Calu3 (cell line): ENCODE measurements at regions of chr2 and their contacts with region 1.

Region 1: GRCh38 chr2:19146867-19147266 is 211.6 kb downstream of the OSR1 start:
- DNase-seq: no peak
- H3K4me3 Mint-ChIP-seq: no peak overlapping the region
- H3K27ac Mint-ChIP-seq: no peak overlapping the region
- H3K4me1 Mint-ChIP-seq: peaks cover 3% of the 10 kb centered on the region
- H3K27me3 Mint-ChIP-seq: no peaks in the 10 kb centered on the region
- CTCF ChIP-seq: no peak

Region 2: DNA sequence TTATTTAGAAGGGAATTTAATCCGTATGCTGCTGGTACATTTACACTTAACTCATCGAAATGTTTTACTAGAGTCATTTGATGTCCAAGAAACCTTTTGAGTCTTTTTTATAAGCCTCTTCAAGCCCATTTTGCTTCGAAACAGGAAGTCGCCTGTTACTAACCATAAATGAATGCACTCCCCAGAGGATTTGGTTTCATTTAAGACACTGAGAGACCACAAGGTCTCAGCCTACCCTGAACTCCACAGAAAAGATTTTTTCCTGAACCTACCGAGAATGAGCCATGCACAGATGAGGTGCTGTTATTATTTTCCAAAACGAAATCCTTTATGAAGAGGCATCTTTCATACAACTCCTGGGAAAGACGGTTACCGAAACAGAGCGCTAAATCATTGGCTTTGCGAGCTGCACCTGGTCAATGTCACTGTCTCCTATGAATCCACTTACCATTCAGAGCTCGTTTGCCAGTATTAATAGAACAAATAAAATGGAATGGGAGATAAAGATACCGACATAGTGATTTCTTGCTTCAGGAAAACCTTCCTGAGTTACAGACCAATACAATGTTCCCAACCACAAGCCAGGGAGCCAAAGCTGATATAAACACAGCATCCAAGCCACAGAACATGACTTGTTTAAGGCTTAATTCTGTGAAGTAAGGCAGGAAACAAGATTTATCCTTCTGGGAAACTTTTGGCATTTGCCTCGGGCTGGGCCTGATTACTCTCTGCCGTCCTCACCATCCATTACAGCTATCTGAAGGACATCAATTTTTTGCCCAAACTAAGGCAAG is 170.5 kb before region 1 on chr2:
- CTCF ChIA-PET with region 1: no interaction called
- intact Hi-C with region 1: no loop called
- DNase-seq: no peak
- H3K4me3 Mint-ChIP-seq: no peak overlapping the region
- H3K27ac Mint-ChIP-seq: no peak overlapping the region
- H3K4me1 Mint-ChIP-seq: peaks cover 5% of the 10 kb centered on the region
- H3K27me3 Mint-ChIP-seq: no peaks in the 10 kb centered on the region
- CTCF ChIP-seq: no peak

Region 3: DNA sequence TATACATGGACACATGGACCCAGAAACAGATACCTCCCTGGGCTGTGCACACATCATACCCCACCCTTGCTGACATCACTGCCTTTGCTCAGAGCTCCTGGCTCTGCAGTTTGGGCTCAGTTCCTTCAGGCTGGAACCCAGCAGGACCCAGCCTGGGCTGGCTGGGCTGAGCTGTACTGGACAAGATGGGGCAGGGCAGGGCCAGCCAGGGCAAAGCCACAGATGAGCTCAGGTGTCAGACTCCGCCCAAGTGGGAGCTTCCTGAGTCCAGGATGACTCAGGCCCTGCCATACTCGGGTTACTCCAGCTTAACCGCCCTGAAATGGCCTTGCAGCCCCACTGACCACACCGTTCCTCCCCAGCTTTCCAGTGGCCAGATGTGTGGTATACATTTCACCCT is 73.3 kb before region 1 on chr2:
- CTCF ChIA-PET with region 1: no interaction called
- intact Hi-C with region 1: no loop called
- DNase-seq: peak; percentile 46
- H3K4me3 Mint-ChIP-seq: no peak overlapping the region
- H3K27ac Mint-ChIP-seq: no peak overlapping the region
- H3K4me1 Mint-ChIP-seq: no peaks in the 10 kb centered on the region
- H3K27me3 Mint-ChIP-seq: no peaks in the 10 kb centered on the region
- CTCF ChIP-seq: no peak

Region 4: DNA sequence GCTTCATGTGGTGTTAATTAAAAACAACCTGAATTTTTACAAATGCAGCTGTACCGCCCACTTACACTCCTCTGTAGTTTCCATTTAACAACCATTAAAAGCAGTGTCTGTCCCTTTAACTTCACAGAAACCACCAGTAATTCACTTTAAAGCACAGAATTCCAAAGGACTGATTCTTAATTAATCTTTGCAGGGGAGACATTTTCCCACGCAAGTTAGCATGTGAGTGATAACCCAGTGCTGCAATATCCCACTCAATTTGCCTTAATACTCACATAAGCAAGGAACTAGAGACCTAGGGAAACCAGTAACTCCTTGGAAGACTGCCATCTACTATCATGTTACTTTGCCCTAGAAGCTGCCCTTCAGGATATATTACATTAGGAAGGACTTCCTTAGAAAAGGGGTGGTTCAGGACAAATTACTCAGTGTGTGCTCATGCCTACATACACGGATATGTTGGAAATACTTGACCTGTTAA is 109.3 kb after region 1 on chr2:
- CTCF ChIA-PET with region 1: no interaction called
- intact Hi-C with region 1: loop called (anchors 1 kb)
- DNase-seq: no peak
- H3K4me3 Mint-ChIP-seq: no peak overlapping the region
- H3K27ac Mint-ChIP-seq: peak overlapping the region; percentile 20
- H3K4me1 Mint-ChIP-seq: peaks cover 19% of the 10 kb centered on the region
- H3K27me3 Mint-ChIP-seq: no peaks in the 10 kb centered on the region
- CTCF ChIP-seq: no peak